Mammary epithelial cell (primary cell): ENCODE measurements at regions of chr21 and their contacts with region 1.

Region 1: DNA sequence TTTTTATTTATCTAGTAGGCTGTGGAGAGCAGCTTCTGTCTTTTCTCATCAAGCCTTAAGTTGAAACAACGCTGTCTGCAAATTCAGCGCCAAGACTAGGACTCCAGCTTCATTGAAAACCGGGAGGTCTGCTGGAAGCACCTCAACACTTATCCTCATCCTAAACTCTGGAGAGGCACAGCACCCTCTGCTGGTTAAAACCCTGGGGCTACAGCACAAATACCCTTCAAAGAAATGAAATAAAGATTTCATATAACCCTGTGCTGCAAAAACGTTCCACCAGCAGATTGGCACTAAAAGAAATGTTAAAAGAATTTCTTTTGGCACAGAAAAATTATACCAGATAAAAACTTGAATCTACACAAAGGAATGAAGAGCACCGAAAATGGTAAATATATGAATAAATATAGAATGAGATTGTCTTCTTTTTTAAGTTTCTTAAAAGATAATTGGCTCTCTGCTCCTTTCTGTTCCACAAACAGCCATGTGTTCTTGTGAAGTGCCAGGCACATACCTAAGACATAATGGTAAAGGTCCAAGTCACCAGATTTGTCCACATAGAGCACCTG is 227.7 kb upstream of the SAMSN1 start:
- DNase-seq: peak; percentile 30
- H3K4me3 ChIP-seq: no peak overlapping the region
- H3K27ac ChIP-seq: no peak overlapping the region
- H3K4me1 ChIP-seq: no peaks in the 10 kb centered on the region
- H3K27me3 ChIP-seq: peaks cover 3% of the 10 kb centered on the region
- CTCF ChIP-seq: peak; percentile 59 to 85

Region 2: DNA sequence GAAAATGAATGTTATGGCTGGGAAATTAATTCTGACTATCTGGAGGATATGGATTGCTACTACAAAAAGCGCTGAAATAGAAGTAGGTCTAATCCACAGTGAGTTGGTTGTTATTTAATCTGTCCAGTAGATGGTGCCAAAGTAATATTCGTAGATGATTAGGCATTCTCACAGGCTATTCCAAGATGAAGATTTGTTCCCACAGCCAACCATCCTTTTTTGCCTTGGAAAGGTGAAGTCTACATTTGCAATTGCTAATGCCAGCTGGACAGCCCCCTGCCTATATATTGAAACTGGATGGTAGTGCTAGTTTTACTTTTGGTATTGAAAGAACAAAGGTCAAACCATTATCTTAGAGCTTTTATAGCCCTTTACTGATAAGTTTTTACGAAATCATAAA is 514.1 kb before region 1 on chr21:
- CTCF ChIA-PET with region 1: no interaction called
- dilution Hi-C with region 1: no loop called
- in situ Hi-C with region 1: no loop called
- intact Hi-C with region 1: loop called (anchors 5 kb)
- DNase-seq: peak; percentile 43
- H3K4me3 ChIP-seq: no peak overlapping the region
- H3K27ac ChIP-seq: no peak overlapping the region
- H3K4me1 ChIP-seq: no peaks in the 10 kb centered on the region
- H3K27me3 ChIP-seq: no peaks in the 10 kb centered on the region
- CTCF ChIP-seq: peak; percentile 38 to 59